HAP-1 (cell line): ENCODE measurements at regions of chr10 and their contacts with region 1.

Region 1: GRCh38 chr10:63976538-63976937 is 455.3 kb downstream of the REEP3 start:
- DNase-seq: peak; percentile 56 to 88
- H3K4me3 ChIP-seq: no peak overlapping the region
- H3K4me1 ChIP-seq: no peaks in the 10 kb centered on the region; the same call in 1 of the 2 replicates
- H3K27me3 ChIP-seq: no peaks in the 10 kb centered on the region

Region 2: GRCh38 chr10:63866075-63866746 is 110.3 kb before region 1 on chr10:
- in situ Hi-C with region 1: loop called (anchors 5 kb)
- DNase-seq: peak; percentile 82 to 88
- H3K4me3 ChIP-seq: peak overlapping the region; percentile 3
- H3K4me1 ChIP-seq: peaks cover 6% of the 10 kb centered on the region
- H3K27me3 ChIP-seq: peaks cover 18% of the 10 kb centered on the region

Region 3: GRCh38 chr10:63935705-63936104 is 40.8 kb before region 1 on chr10:
- in situ Hi-C with region 1: loop called (anchors 5 kb)
- DNase-seq: peak in 1 of 2 experiments; percentile 71
- H3K4me3 ChIP-seq: no peak overlapping the region
- H3K4me1 ChIP-seq: peaks cover 21% of the 10 kb centered on the region
- H3K27me3 ChIP-seq: no peaks in the 10 kb centered on the region

Region 4: DNA sequence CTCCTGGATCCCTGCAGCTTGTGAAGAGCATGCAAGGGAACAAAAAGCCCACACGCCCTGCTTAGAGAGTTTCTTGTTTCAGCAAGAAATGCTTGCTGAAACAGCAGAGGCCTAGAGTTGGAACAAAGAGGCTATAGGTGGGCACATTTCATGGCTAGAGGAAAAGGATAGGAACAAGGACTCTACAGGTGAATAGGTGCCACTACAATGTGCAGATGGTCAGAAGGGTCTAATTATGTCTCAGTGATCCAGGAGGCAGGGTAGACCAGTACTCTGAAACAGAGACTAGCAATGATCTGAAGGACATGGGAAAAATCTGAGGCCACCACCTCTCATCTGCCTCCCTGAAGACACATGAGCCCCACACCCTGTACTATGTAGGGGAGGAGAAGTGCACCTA is 153.6 kb after region 1 on chr10:
- in situ Hi-C with region 1: no loop called
- DNase-seq: no peak
- H3K4me3 ChIP-seq: no peak overlapping the region
- H3K4me1 ChIP-seq: no peaks in the 10 kb centered on the region
- H3K27me3 ChIP-seq: peaks cover 3% of the 10 kb centered on the region; the same call in 1 of the 2 replicates